Calu3 (cell line): ENCODE measurements at regions of chr5 and their contacts with region 1.

Region 1: GRCh38 chr5:26482810-26483375 is 555.5 kb downstream of the CDH9 start:
- DNase-seq: peak; percentile 39
- H3K4me3 Mint-ChIP-seq: no peak overlapping the region
- H3K27ac Mint-ChIP-seq: no peak overlapping the region
- H3K4me1 Mint-ChIP-seq: no peaks in the 10 kb centered on the region
- H3K27me3 Mint-ChIP-seq: no peaks in the 10 kb centered on the region
- CTCF ChIP-seq: peak; percentile 30

Region 2: GRCh38 chr5:24633712-24634325 is 1849.1 kb before region 1 on chr5:
- CTCF ChIA-PET with region 1: no interaction called
- intact Hi-C with region 1: loop called (anchors 10 kb)
- DNase-seq: peak; percentile 35
- H3K4me3 Mint-ChIP-seq: no peak overlapping the region
- H3K27ac Mint-ChIP-seq: no peak overlapping the region
- H3K4me1 Mint-ChIP-seq: no peaks in the 10 kb centered on the region
- H3K27me3 Mint-ChIP-seq: no peaks in the 10 kb centered on the region
- CTCF ChIP-seq: peak; percentile 17

Region 3: GRCh38 chr5:26884481-26884880 is 401.6 kb after region 1 on chr5:
- CTCF ChIA-PET with region 1: no interaction called
- intact Hi-C with region 1: no loop called
- DNase-seq: no peak
- H3K4me3 Mint-ChIP-seq: no peak overlapping the region
- H3K27ac Mint-ChIP-seq: no peak overlapping the region
- H3K4me1 Mint-ChIP-seq: no peaks in the 10 kb centered on the region
- H3K27me3 Mint-ChIP-seq: no peaks in the 10 kb centered on the region
- CTCF ChIP-seq: no peak